ENCODE measurements at regions of chr6 and their contacts with region 1.

Region 1: DNA sequence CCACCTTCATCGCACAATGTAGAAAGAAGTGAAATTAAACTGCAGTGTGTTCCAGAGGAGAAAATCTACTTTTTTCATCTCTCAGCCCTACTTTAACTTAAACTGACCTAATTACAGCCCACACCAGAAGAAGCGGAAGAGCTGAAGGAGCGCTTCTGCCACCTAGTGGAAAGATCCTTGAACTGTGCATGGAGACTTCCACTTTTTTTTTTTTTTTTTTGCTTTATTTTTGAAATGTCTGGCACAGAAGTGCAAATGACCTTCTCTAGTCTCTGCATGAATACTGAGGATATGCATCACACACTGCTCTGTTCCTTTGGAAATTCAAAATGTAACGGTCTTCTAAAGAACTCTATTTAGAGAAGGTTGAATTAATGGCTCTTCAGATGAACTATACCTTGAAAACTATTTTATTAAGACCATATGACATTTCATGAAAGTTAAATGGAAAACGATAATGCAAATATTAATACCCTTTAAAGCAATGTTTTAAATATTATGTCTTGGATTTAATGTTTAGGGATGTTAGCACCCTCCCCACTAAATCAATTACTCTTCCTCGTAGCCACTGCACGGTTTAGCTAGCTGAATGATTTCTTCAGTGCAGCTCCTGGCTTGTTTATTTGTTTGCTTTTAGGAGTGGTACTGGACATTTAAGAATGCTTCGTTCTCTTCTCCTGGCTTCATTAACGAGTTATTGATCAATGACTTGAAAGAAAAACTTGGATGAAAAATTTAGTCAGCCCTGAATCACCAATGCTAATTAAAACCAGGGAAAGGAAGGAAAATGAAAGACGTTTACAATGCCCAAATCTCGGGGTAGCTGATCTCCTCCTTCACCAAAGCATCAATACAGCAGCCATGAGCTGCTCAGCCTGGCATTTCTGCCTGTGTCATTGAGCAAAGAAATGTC is 569.6 kb upstream of the GJE1 start:
- DNase-seq: peak; percentile 35
- H3K4me3 Mint-ChIP-seq: peak overlapping the region; percentile 51
- H3K27ac Mint-ChIP-seq: peak overlapping the region; percentile 2
- H3K4me1 Mint-ChIP-seq: peaks cover 19% of the 10 kb centered on the region
- H3K27me3 Mint-ChIP-seq: peaks cover 8% of the 10 kb centered on the region

Region 2: DNA sequence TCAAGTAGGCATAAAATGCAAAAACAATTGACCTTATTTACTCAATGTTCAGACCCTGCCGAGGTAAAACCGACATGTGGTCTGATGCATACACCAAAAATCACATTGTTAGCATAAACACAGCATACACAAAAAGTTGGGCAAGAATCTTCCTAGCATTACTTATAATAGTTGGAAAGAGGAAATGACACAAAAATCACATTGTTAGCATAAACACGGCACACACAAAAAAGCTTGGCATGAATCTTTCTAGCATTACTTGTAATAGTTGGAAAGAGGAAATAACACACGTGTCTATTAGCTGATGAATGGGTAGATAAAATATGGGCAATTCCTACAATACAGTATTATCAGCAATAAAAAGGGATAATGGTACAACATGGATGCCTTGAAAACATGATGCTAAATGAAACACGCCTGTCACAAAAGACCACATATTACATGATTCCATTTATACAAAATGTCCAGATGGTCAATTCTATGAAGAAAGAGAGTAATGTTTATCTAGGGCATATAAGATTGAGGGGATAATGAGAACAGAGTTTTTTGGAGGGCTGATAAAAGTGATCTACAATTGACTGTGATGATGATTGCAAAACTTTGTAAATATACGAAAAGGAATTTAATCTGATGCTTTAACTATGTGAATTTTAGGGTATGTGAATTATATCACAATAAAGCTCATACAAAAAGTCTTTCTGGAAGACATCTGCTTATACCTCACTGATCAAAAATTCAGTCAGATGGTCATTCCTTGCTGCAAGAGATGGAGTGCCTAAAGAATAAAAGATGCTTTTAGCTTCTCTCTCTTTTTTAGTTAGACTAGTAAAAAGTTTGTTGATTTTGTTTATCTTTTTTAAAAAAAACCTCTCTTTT is 1169.2 kb before region 1 on chr6:
- intact Hi-C with region 1: loop called (anchors 10 kb)
- DNase-seq: no peak
- H3K4me3 Mint-ChIP-seq: no peak overlapping the region
- H3K27ac Mint-ChIP-seq: no peak overlapping the region
- H3K4me1 Mint-ChIP-seq: no peaks in the 10 kb centered on the region
- H3K27me3 Mint-ChIP-seq: peaks cover 9% of the 10 kb centered on the region

Region 3: GRCh38 chr6:141133346-141133745 is 429.8 kb before region 1 on chr6:
- intact Hi-C with region 1: loop called (anchors 10 kb)
- DNase-seq: no peak
- H3K4me3 Mint-ChIP-seq: no peak overlapping the region
- H3K27ac Mint-ChIP-seq: no peak overlapping the region
- H3K4me1 Mint-ChIP-seq: no peaks in the 10 kb centered on the region
- H3K27me3 Mint-ChIP-seq: peaks cover 3% of the 10 kb centered on the region

Region 4: DNA sequence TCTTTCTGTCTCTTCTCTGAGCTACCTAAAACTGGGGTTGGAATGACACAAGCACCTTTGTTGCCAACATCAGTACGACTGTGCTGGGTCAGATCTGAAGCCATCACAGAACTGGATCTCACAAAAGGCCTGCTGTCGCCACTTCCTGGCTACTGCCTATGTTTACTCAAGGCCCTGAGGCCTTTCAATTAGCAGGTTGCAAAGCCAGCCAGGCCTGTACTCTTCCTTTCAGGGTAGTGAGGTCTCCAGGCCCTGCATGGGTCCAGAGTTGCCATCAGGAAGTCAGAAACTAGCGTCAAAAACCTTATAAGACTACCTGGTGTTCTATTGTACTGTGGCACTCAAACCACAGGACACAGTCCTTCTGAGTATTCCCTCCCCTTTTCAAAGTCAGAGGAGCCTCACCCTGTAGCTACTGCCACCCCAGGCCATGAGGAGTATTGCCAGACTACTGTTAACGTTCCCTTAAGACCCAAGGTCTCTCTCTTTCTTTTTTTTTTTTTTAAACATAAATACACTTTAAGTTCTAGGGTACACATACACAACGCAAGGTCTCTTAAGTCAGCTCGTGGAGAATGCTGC is 367.8 kb before region 1 on chr6:
- intact Hi-C with region 1: no loop called
- DNase-seq: no peak
- H3K4me3 Mint-ChIP-seq: no peak overlapping the region
- H3K27ac Mint-ChIP-seq: no peak overlapping the region
- H3K4me1 Mint-ChIP-seq: no peaks in the 10 kb centered on the region
- H3K27me3 Mint-ChIP-seq: no peaks in the 10 kb centered on the region

Region 5: DNA sequence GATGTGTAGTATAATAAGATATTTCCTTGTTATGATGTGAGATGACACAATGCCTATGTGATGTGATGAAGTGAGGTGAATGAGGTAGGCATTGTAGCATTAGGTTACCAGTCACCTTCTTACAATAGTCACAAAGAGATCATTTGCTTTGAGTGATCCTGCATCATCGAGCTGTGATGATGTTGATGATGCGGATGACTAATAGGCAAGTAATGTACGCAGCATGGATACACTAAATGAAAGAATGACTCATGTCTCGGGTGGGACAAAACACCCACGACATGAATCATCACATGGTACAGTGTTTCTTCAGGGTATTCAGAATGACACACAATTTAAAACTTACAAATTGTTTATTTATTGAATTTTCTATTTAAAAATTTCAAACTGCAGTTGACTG is 236.7 kb before region 1 on chr6:
- intact Hi-C with region 1: loop called (anchors 5 kb)
- DNase-seq: no peak
- H3K4me3 Mint-ChIP-seq: no peak overlapping the region
- H3K27ac Mint-ChIP-seq: no peak overlapping the region
- H3K4me1 Mint-ChIP-seq: peaks cover 11% of the 10 kb centered on the region
- H3K27me3 Mint-ChIP-seq: no peaks in the 10 kb centered on the region

Region 6: DNA sequence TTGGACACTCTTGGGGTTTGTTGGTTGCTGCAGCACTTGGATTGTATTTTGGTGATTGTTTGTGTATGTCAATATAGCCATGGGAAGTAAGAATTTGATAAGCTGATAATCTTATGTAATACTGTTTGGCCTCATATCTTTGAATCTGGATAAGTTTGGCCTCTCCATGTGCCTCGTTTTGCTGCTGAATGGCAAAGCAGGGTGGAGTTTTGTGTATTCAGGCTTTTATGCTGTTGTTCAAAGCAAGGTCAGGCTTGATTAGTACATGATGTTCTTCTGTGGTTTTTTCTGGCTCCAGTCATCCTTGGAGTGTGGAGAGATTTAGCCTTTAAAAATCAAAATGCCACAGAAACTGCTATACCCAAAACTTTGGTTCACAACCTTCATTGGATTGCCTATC is 159.3 kb before region 1 on chr6:
- intact Hi-C with region 1: no loop called
- DNase-seq: no peak
- H3K4me3 Mint-ChIP-seq: no peak overlapping the region
- H3K27ac Mint-ChIP-seq: no peak overlapping the region
- H3K4me1 Mint-ChIP-seq: peaks cover 8% of the 10 kb centered on the region
- H3K27me3 Mint-ChIP-seq: no peaks in the 10 kb centered on the region

Region 7: GRCh38 chr6:141483598-141484061 is 79.5 kb before region 1 on chr6:
- intact Hi-C with region 1: loop called (anchors 1 kb)
- DNase-seq: peak; percentile 51
- H3K4me3 Mint-ChIP-seq: peak overlapping the region; percentile 87
- H3K27ac Mint-ChIP-seq: peak overlapping the region; percentile 98
- H3K4me1 Mint-ChIP-seq: peaks cover 47% of the 10 kb centered on the region
- H3K27me3 Mint-ChIP-seq: no peaks in the 10 kb centered on the region

Region 8: GRCh38 chr6:141532211-141532610 is 30.9 kb before region 1 on chr6:
- intact Hi-C with region 1: no loop called
- DNase-seq: no peak
- H3K4me3 Mint-ChIP-seq: no peak overlapping the region
- H3K27ac Mint-ChIP-seq: no peak overlapping the region
- H3K4me1 Mint-ChIP-seq: no peaks in the 10 kb centered on the region
- H3K27me3 Mint-ChIP-seq: peaks cover 2% of the 10 kb centered on the region

Region 9: DNA sequence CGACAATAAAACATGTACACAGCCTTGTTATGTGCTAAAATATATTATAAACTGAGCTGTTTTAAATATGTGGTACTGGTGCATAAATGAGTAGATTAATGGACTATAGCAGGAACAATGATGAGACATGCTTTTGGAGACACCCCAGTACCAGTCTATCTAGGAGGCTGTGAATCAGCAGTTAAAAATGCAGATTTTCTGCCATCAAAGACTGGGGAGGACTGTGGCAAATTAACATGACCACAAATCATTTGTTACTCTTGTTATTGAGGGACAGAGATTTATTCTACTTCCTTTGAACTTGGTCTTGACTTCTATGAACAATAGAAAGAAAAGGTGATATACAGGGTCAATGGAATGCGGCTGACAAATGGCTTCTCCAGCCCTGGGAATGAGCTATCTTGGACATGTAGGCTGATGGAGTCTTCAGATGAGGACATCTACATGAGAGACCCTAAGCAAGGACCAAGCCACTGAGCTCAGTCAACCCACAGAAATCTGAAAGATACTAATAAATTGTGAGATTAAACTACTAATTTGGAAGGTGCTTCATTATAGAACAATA is 18.0 kb after region 1 on chr6:
- intact Hi-C with region 1: no loop called
- DNase-seq: no peak
- H3K4me3 Mint-ChIP-seq: no peak overlapping the region
- H3K27ac Mint-ChIP-seq: no peak overlapping the region
- H3K4me1 Mint-ChIP-seq: no peaks in the 10 kb centered on the region
- H3K27me3 Mint-ChIP-seq: no peaks in the 10 kb centered on the region